CD8-positive, alpha-beta T cell (primary cell): ENCODE measurements at regions of chr16 and their contacts with region 1.

Region 1: DNA sequence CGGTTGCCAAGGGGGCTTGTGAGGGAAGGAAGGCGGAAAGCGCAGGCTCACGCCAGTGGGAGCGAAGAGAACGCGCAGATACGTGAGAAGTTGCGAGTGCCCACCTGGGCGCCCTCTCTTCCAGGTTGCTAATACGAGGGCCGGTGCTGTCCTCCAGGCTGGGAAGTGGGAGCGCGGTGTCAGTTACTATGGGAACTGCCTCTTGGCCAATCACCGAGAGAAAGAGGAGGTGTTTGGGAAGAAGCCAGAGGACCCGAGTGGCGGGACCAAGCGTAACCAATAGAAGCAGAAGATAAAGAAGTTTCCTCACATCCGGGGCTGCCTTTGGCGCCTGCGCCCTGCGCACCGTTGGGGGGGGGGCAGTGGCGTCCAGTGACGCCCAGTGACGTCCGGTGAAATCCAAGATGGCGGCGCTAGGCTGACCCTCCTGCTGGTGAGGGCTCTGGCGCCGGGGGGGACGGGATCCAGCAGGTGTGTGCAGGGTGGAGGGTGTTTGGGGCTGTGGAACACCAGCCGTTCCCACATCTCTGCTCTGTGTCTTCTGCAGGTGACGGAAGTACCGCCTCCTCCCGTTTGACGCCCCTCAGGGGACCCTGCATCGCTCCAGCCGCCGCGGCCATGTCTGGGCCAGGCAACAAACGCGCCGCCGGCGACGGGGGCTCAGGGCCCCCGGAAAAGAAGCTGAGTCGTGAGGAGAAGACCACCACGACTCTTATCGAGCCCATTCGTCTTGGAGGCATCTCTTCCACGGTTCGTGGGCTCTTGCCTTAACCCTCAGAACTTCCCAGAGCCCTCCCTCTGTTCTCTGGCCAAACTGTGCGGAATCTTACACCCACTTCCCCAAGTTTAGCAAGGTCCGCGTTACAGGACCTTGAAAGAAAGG is at the starts of genes CFAP119 and RNF40:
- DNase-seq: peak; percentile 67 to 96 (median 90)
- ATAC-seq: peak; percentile 91
- H3K4me3 ChIP-seq: peak within 1 kb of the TSS; percentile 59 to 95
- H3K4me3 Mint-ChIP-seq: peak within 1 kb of the TSS; percentile 96
- H3K27ac ChIP-seq: peak within 1 kb of the TSS; percentile 74 to 93
- H3K27ac Mint-ChIP-seq: peak within 1 kb of the TSS; percentile 92
- H3K4me1 ChIP-seq: peaks cover 24% of the 10 kb centered on the region
- H3K4me1 Mint-ChIP-seq: peaks cover 26% of the 10 kb centered on the region
- H3K27me3 ChIP-seq: no peaks in the 10 kb centered on the region
- H3K27me3 Mint-ChIP-seq: no peaks in the 10 kb centered on the region
- CTCF ChIP-seq: no peak
- total RNA-seq, gene CFAP119: 2.7 to 3.6 TPM
- total RNA-seq, gene RNF40: 98.7 to 101 TPM

Region 2: DNA sequence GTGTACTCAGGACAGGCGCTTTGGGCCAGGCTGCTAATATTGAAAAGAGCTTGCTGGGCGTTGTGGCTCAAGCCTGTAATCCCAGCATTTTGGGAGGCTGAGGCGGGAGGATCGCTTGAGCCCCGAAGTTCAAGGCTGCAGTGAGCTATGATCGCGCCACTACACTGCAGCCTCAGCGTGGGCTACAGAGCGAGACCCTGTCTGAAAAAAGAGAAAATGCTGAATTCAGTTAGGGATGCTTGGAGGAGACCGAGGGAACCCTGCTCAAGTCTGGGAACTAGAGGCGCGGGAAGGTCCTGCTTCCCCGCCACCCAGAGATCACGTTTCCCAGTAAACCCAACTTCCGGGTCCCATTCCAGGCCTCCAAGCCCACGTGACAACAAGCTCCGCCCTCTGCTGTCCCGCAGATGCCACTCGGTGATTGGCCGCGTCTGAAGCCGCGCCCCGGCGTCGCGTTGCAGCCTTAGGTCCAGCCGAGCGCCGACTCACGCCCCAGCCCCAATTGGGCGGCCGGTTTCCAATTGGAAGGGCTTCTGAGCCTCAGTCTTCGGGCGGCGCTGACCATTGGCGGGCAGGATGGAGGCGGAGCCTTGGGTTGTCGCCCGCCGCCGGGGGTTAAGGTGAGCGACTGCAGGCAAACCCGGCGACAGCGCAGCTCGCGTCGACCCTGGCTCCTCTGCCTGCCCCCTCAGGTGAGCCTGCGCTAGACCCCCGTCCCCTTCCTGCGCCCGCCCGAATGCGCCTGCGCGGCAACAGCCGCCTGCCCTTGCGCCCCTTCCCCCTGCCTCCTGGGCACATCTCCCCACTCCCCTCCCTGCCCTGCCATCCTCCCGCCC is 14.2 kb before region 1 on chr16 and contains the start of gene PHKG2:
- CTCF ChIA-PET with region 1: interaction called, 3 read pairs
- POLR2A ChIA-PET with region 1: interaction called, 12 read pairs
- intact Hi-C with region 1: loop called (anchors 1 kb)
- DNase-seq: peak; percentile 88 to 99 (median 96)
- ATAC-seq: peak; percentile 93
- H3K4me3 ChIP-seq: peak within 1 kb of the TSS; percentile 59 to 68
- H3K4me3 Mint-ChIP-seq: peak within 1 kb of the TSS; percentile 89
- H3K27ac ChIP-seq: peak within 1 kb of the TSS; percentile 50 to 83
- H3K27ac Mint-ChIP-seq: peak within 1 kb of the TSS; percentile 66
- H3K4me1 ChIP-seq: peaks cover 12% of the 10 kb centered on the region
- H3K4me1 Mint-ChIP-seq: peaks cover 22% of the 10 kb centered on the region
- H3K27me3 ChIP-seq: no peaks in the 10 kb centered on the region
- H3K27me3 Mint-ChIP-seq: no peaks in the 10 kb centered on the region
- CTCF ChIP-seq: no peak
- total RNA-seq, gene PHKG2: 26.4 to 36.3 TPM

Region 3: DNA sequence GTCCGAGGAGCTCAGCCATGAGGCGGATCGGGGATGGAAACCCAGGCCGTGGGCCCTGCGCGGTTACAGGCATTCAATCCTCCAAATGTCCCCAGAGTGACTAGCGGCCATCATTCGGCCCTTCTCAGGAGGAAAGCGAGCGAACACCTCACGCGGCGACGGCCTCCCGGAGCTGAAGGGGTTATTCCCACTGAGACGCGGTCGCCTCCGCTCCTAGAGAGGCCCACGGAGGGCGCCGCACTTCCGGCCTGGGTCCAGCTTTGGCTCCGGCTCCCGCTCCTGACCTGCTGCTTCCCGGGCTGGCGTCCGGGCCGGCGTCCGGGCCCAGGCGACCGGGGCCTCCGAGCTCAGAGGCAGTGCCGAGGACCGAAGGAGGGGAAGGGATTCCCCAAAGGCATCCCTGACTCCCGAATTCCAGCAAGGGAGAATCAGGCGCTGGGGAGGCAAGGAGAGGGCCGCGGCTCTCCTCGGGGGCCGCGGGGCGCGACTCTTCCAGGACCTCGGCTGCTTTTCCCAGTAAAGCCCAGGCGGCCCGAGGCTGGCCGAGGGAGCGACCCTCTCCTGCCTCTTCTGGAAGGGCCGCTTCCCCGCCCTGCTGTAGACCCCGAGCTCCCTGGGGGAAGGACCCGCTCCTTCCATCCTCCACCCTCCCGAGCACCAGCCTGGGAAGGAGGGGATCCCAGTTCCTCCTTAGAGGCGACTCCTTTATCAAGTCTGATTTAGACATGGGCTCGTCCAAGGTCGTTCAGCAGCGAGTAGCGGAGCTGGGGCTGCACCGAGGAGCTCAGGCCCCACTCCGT is 43.4 kb after region 1 on chr16:
- CTCF ChIA-PET with region 1: interaction called, 3 read pairs
- POLR2A ChIA-PET with region 1: no interaction called
- intact Hi-C with region 1: loop called in 1 of 2 experiments (anchors 2 kb)
- DNase-seq: peak in 8 of 9 experiments; percentile 39 to 80 (median 64)
- ATAC-seq: peak; percentile 86
- H3K4me3 ChIP-seq: peak overlapping the region; percentile 75 to 89
- H3K4me3 Mint-ChIP-seq: peak overlapping the region; percentile 83
- H3K27ac ChIP-seq: peak overlapping the region; percentile 36 to 48
- H3K27ac Mint-ChIP-seq: peak overlapping the region; percentile 55
- H3K4me1 ChIP-seq: peaks cover 16% of the 10 kb centered on the region
- H3K4me1 Mint-ChIP-seq: peaks cover 21% of the 10 kb centered on the region
- H3K27me3 ChIP-seq: no peaks in the 10 kb centered on the region
- H3K27me3 Mint-ChIP-seq: no peaks in the 10 kb centered on the region
- CTCF ChIP-seq: no peak

Region 4: GRCh38 chr16:30874821-30875717 is 112.9 kb after region 1 on chr16:
- CTCF ChIA-PET with region 1: no interaction called
- POLR2A ChIA-PET with region 1: no interaction called
- intact Hi-C with region 1: loop called in 1 of 2 experiments (anchors 1 kb)
- DNase-seq: peak; percentile 78 to 95 (median 89)
- ATAC-seq: peak; percentile 78
- H3K4me3 ChIP-seq: peak overlapping the region; percentile 87 to 97
- H3K4me3 Mint-ChIP-seq: peak overlapping the region; percentile 90
- H3K27ac ChIP-seq: peak overlapping the region; percentile 84 to 94
- H3K27ac Mint-ChIP-seq: peak overlapping the region; percentile 96
- H3K4me1 ChIP-seq: peaks cover 24% of the 10 kb centered on the region
- H3K4me1 Mint-ChIP-seq: peaks cover 29% of the 10 kb centered on the region
- H3K27me3 ChIP-seq: no peaks in the 10 kb centered on the region
- H3K27me3 Mint-ChIP-seq: no peaks in the 10 kb centered on the region
- CTCF ChIP-seq: no peak

Region 5: GRCh38 chr16:30910427-30911029 is 148.4 kb after region 1 on chr16:
- CTCF ChIA-PET with region 1: no interaction called
- POLR2A ChIA-PET with region 1: no interaction called
- intact Hi-C with region 1: no loop called
- DNase-seq: no peak
- ATAC-seq: no peak
- H3K4me3 ChIP-seq: no peak overlapping the region
- H3K4me3 Mint-ChIP-seq: no peak overlapping the region
- H3K27ac ChIP-seq: no peak overlapping the region
- H3K27ac Mint-ChIP-seq: no peak overlapping the region
- H3K4me1 ChIP-seq: peaks cover 10% of the 10 kb centered on the region
- H3K4me1 Mint-ChIP-seq: peaks cover 10% of the 10 kb centered on the region
- H3K27me3 ChIP-seq: no peaks in the 10 kb centered on the region
- H3K27me3 Mint-ChIP-seq: no peaks in the 10 kb centered on the region
- CTCF ChIP-seq: no peak

Region 6: GRCh38 chr16:31117391-31118197 is 355.4 kb after region 1 on chr16 and contains the start of gene KAT8:
- CTCF ChIA-PET with region 1: no interaction called
- POLR2A ChIA-PET with region 1: no interaction called
- intact Hi-C with region 1: loop called in 1 of 2 experiments (anchors 1 kb)
- DNase-seq: peak; percentile 92 to 99 (median 97)
- ATAC-seq: peak; percentile 92
- H3K4me3 ChIP-seq: peak within 1 kb of the TSS; percentile 53 to 93
- H3K4me3 Mint-ChIP-seq: peak within 1 kb of the TSS; percentile 74
- H3K27ac ChIP-seq: peak within 1 kb of the TSS; percentile 83 to 96
- H3K27ac Mint-ChIP-seq: peak within 1 kb of the TSS; percentile 95
- H3K4me1 ChIP-seq: peaks cover 11% of the 10 kb centered on the region
- H3K4me1 Mint-ChIP-seq: peaks cover 18% of the 10 kb centered on the region
- H3K27me3 ChIP-seq: no peaks in the 10 kb centered on the region
- H3K27me3 Mint-ChIP-seq: no peaks in the 10 kb centered on the region
- CTCF ChIP-seq: no peak
- total RNA-seq, gene KAT8: 105 to 107 TPM